PC-3 (cell line): ENCODE measurements at regions of chr6 and their contacts with region 1.

Region 1: DNA sequence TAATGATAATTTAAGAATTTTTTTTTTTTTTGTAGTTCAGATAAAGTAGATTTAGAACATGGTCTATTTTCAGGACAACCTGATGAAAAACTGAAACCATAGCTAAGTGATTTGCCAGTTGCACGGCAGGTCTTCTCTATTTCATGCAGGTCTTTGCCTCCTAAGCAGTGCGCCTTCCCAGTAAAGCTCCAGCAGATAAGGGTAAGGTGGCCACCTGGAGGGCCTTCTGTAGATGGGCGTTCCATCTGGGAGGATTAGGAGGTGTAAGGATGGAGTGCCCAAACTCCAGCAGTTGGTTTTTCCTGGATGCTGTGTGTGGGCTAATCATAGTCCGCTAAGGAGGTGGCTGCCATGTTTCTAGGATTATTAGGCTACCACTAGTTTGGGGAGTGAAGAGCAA is 107.1 kb downstream of the ARID1B start:
- DNase-seq: no peak
- ATAC-seq: no peak
- H3K4me3 ChIP-seq: no peak overlapping the region
- H3K27ac ChIP-seq: no peak overlapping the region
- H3K4me1 ChIP-seq: peaks cover 6% of the 10 kb centered on the region
- H3K27me3 ChIP-seq: no peaks in the 10 kb centered on the region
- CTCF ChIP-seq: no peak

Region 2: GRCh38 chr6:156853733-156854132 is 30.6 kb before region 1 on chr6:
- CTCF ChIA-PET with region 1: interaction called, 10 read pairs
- POLR2A ChIA-PET with region 1: no interaction called
- intact Hi-C with region 1: no loop called
- DNase-seq: no peak
- ATAC-seq: no peak
- H3K4me3 ChIP-seq: no peak overlapping the region
- H3K27ac ChIP-seq: no peak overlapping the region
- H3K4me1 ChIP-seq: no peaks in the 10 kb centered on the region
- H3K27me3 ChIP-seq: no peaks in the 10 kb centered on the region
- CTCF ChIP-seq: no peak

Region 3: GRCh38 chr6:157034436-157035230 is 150.3 kb after region 1 on chr6:
- CTCF ChIA-PET with region 1: no interaction called
- POLR2A ChIA-PET with region 1: no interaction called
- intact Hi-C with region 1: no loop called
- DNase-seq: peak; percentile 53
- ATAC-seq: peak; percentile 61
- H3K4me3 ChIP-seq: peak overlapping the region; percentile 71
- H3K27ac ChIP-seq: no peak overlapping the region
- H3K4me1 ChIP-seq: peaks cover 23% of the 10 kb centered on the region
- H3K27me3 ChIP-seq: no peaks in the 10 kb centered on the region
- CTCF ChIP-seq: peak; percentile 67